Activated CD8-positive, alpha-beta memory T cell treated with anti-CD3 and anti-CD28 coated beads, Interleukin-2, amount 10 ng/mL, durations not matched to agents 7 days and 5 days (primary cell): ENCODE measurements at regions of chr17 and their contacts with region 1.

Region 1: DNA sequence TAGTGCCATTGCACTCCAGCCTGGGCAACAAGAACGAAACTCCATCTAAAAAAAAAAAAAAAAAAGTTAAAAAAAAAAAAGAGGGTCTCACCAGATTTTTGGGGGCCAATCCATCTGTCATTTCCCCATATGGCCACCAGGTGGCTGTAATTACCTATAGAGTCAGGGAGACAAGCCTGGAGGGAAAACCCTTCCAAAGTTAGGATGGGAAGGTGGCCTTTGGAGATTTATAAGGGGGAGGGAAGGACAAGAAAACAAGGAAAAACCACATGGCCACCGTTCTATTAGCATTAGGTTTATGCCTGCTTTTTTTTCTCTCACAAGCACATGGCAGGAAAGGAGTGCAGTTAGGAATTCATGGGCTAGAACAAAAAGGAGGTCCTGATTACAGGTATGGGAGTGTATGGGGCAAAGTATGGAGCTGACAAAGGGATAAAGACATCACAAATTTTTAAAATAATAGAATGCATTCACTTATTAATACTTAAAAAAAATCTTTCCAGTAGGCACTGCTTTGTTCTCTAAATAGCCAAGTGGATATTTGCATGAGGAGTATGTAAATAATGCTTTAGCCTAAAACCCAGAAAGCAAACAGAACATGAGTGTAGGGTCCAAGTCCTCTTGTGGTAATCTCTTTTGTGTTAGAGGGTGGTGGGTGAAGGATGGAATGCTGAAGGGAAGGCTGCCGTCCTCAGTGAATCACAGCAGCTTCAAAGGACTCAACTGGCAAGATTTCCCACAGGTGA is 5.1 kb downstream of the CYB5D1 start:
- DNase-seq: peak; percentile 70
- ATAC-seq: no peak
- H3K4me3 Mint-ChIP-seq: no peak overlapping the region
- H3K27ac Mint-ChIP-seq: no peak overlapping the region
- H3K4me1 Mint-ChIP-seq: peaks cover 11% of the 10 kb centered on the region
- H3K27me3 Mint-ChIP-seq: no peaks in the 10 kb centered on the region

Region 2: GRCh38 chr17:7720125-7720524 is 142.7 kb before region 1 on chr17:
- CTCF ChIA-PET with region 1: no interaction called
- DNase-seq: no peak
- ATAC-seq: no peak
- H3K4me3 Mint-ChIP-seq: no peak overlapping the region
- H3K27ac Mint-ChIP-seq: no peak overlapping the region
- H3K4me1 Mint-ChIP-seq: peaks cover 25% of the 10 kb centered on the region
- H3K27me3 Mint-ChIP-seq: peaks cover 64% of the 10 kb centered on the region

Region 3: DNA sequence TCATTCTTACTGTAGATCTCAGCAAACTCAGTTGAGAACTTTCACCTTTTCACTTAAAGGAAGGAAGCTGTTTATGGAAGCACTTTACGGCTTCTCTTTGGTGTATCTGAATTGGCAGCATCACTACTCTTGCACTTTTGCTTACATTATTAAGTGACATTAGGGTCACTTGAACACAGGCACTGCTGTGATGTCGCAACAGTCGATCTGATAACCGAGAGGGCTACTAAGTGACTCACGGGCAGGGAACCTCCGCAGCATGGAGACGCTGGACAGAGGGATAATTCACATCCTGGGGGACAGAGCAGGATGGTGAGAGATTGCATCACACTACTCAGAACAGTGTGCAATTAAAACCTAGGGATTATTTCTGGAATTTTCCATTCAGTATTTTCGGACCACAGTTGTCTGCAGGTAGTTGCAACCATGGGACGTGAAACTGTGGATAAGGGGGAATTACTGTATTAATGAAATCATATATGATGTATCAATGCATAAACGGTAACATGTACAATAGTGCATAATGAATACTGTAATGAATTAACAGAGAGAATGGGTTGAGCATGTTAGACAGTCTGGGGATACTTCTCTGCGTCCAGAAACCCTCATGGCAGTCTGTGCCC is 88.7 kb before region 1 on chr17:
- CTCF ChIA-PET with region 1: no interaction called
- DNase-seq: no peak
- ATAC-seq: no peak
- H3K4me3 Mint-ChIP-seq: no peak overlapping the region
- H3K27ac Mint-ChIP-seq: no peak overlapping the region
- H3K4me1 Mint-ChIP-seq: no peaks in the 10 kb centered on the region
- H3K27me3 Mint-ChIP-seq: peaks cover 36% of the 10 kb centered on the region

Region 4: GRCh38 chr17:7844292-7845154 is 18.3 kb before region 1 on chr17:
- CTCF ChIA-PET with region 1: no interaction called
- DNase-seq: peak; percentile 93
- ATAC-seq: peak; percentile 73
- H3K4me3 Mint-ChIP-seq: peak overlapping the region; percentile 80
- H3K27ac Mint-ChIP-seq: peak overlapping the region; percentile 99
- H3K4me1 Mint-ChIP-seq: peaks cover 34% of the 10 kb centered on the region
- H3K27me3 Mint-ChIP-seq: no peaks in the 10 kb centered on the region

Region 5: GRCh38 chr17:7873051-7873450 is 10.2 kb after region 1 on chr17:
- CTCF ChIA-PET with region 1: interaction called, 37 read pairs
- DNase-seq: peak; percentile 3
- ATAC-seq: no peak
- H3K4me3 Mint-ChIP-seq: no peak overlapping the region
- H3K27ac Mint-ChIP-seq: no peak overlapping the region
- H3K4me1 Mint-ChIP-seq: peaks cover 20% of the 10 kb centered on the region
- H3K27me3 Mint-ChIP-seq: no peaks in the 10 kb centered on the region

Region 6: GRCh38 chr17:7897773-7898172 is 34.9 kb after region 1 on chr17:
- CTCF ChIA-PET with region 1: interaction called, 24 read pairs
- DNase-seq: no peak
- ATAC-seq: peak; percentile 51
- H3K4me3 Mint-ChIP-seq: no peak overlapping the region
- H3K27ac Mint-ChIP-seq: peak overlapping the region; percentile 5
- H3K4me1 Mint-ChIP-seq: peaks cover 1% of the 10 kb centered on the region
- H3K27me3 Mint-ChIP-seq: no peaks in the 10 kb centered on the region

Region 7: GRCh38 chr17:7915611-7916382 is 52.9 kb after region 1 on chr17 and contains the start of gene RNF227:
- CTCF ChIA-PET with region 1: interaction called, 14 read pairs
- DNase-seq: peak; percentile 89
- ATAC-seq: peak; percentile 87
- H3K4me3 Mint-ChIP-seq: peak within 1 kb of the TSS; percentile 87
- H3K27ac Mint-ChIP-seq: peak within 1 kb of the TSS; percentile 94
- H3K4me1 Mint-ChIP-seq: peaks cover 28% of the 10 kb centered on the region
- H3K27me3 Mint-ChIP-seq: no peaks in the 10 kb centered on the region
- total RNA-seq, gene RNF227: 2.8 to 3.9 TPM